ENCODE measurements at regions of chr16 and their contacts with region 1.

Region 1: DNA sequence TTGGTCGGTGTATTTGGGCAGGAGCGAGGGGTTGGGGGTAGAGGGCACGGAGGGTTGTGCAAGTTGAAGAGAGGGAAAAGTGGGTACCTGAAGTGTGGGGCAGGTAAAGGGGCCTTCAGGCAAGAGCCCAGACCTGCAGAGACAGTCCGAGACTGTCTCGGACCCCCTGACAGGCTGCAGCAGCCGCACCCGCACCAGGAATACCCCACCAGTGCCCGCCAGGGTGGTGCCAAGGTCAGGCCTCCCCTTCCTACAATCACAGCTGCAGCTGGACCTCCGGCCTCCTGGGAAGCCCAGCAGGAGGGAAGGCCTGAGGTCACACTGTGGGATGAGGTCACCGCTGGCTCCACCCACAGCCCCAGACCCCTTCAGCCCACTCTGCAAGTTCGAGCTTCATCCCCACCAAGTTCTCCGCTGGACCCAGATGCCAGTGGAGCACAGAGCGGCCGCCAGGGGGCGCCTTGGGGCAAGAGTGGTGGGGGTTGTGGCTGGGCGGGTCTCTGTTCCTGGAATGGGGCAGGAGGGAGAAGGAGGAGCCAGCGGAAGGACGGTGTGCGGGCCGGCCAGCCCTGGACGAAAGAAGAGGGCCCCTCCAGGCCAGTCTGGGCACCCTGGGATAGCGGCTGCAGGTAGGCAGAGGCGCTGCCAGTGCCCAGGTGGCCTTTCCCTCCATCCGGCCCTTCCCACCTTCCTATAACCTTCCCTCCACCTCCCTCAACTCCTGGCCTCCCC is at the start of gene HSD3B7:
- DNase-seq: peak; percentile 55 to 90 (median 78)
- ATAC-seq: peak; percentile 85
- H3K4me3 ChIP-seq: no peak within 1 kb of the TSS
- H3K4me3 Mint-ChIP-seq: no peak within 1 kb of the TSS
- H3K27ac ChIP-seq: no peak within 1 kb of the TSS
- H3K27ac Mint-ChIP-seq: no peak within 1 kb of the TSS
- H3K4me1 ChIP-seq: peaks cover 3% of the 10 kb centered on the region
- H3K4me1 Mint-ChIP-seq: peaks cover 4% of the 10 kb centered on the region
- H3K27me3 ChIP-seq: no peaks in the 10 kb centered on the region
- H3K27me3 Mint-ChIP-seq: no peaks in the 10 kb centered on the region
- CTCF ChIP-seq: peak; percentile 77
- total RNA-seq, gene HSD3B7: 0.19 to 0.25 TPM

Region 2: DNA sequence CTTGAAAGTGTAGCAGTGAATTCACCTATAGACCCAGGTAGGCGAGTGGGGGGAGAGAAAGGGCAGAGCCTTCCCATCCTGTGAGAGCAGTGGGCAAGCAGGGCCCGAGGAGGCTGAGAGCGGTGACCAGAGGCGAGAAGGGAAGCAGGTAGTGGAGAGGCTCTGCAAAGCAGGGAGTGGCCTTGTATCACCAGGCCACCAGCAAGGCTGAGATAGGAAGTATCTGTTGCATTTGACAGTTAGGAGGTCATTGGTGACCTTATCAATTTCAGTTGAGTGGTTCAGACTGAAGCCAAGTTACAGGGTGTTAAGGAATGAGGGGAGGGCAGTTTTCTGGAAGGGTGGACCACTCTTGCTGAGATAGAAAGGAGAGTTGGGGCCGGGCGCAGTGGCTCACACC is 10.5 kb before region 1 on chr16:
- CTCF ChIA-PET with region 1: interaction called, 14 read pairs
- POLR2A ChIA-PET with region 1: no interaction called
- intact Hi-C with region 1: no loop called
- DNase-seq: no peak
- ATAC-seq: no peak
- H3K4me3 ChIP-seq: no peak overlapping the region
- H3K4me3 Mint-ChIP-seq: no peak overlapping the region
- H3K27ac ChIP-seq: no peak overlapping the region
- H3K27ac Mint-ChIP-seq: peak overlapping the region; percentile 37
- H3K4me1 ChIP-seq: no peaks in the 10 kb centered on the region
- H3K4me1 Mint-ChIP-seq: peaks cover 2% of the 10 kb centered on the region
- H3K27me3 ChIP-seq: no peaks in the 10 kb centered on the region
- H3K27me3 Mint-ChIP-seq: no peaks in the 10 kb centered on the region
- CTCF ChIP-seq: no peak

Region 3: GRCh38 chr16:31094424-31095120 is 109.7 kb after region 1 on chr16 and contains the start of gene VKORC1:
- CTCF ChIA-PET with region 1: interaction called, 26 read pairs
- POLR2A ChIA-PET with region 1: no interaction called
- intact Hi-C with region 1: loop called (anchors 1 kb)
- DNase-seq: peak; percentile 65 to 93 (median 85)
- ATAC-seq: peak; percentile 86
- H3K4me3 ChIP-seq: peak within 1 kb of the TSS; percentile 72 to 91
- H3K4me3 Mint-ChIP-seq: peak within 1 kb of the TSS; percentile 93
- H3K27ac ChIP-seq: peak within 1 kb of the TSS; percentile 69 to 74
- H3K27ac Mint-ChIP-seq: peak within 1 kb of the TSS; percentile 91
- H3K4me1 ChIP-seq: peaks cover 19% of the 10 kb centered on the region
- H3K4me1 Mint-ChIP-seq: peaks cover 25% of the 10 kb centered on the region
- H3K27me3 ChIP-seq: no peaks in the 10 kb centered on the region
- H3K27me3 Mint-ChIP-seq: no peaks in the 10 kb centered on the region
- CTCF ChIP-seq: no peak
- total RNA-seq, gene VKORC1: 23.0 to 27.2 TPM

Region 4: GRCh38 chr16:31333686-31334649 is 349.1 kb after region 1 on chr16:
- CTCF ChIA-PET with region 1: interaction called, 3 read pairs
- POLR2A ChIA-PET with region 1: no interaction called
- intact Hi-C with region 1: loop called in 1 of 2 experiments (anchors 2 kb)
- DNase-seq: peak in 6 of 9 experiments; percentile 27 to 66 (median 39)
- ATAC-seq: peak; percentile 70
- H3K4me3 ChIP-seq: no peak overlapping the region
- H3K4me3 Mint-ChIP-seq: no peak overlapping the region
- H3K27ac ChIP-seq: no peak overlapping the region
- H3K27ac Mint-ChIP-seq: peak overlapping the region; percentile 49
- H3K4me1 ChIP-seq: peaks cover 37% of the 10 kb centered on the region
- H3K4me1 Mint-ChIP-seq: peaks cover 43% of the 10 kb centered on the region
- H3K27me3 ChIP-seq: no peaks in the 10 kb centered on the region
- H3K27me3 Mint-ChIP-seq: no peaks in the 10 kb centered on the region
- CTCF ChIP-seq: peak; percentile 12

Region 5: DNA sequence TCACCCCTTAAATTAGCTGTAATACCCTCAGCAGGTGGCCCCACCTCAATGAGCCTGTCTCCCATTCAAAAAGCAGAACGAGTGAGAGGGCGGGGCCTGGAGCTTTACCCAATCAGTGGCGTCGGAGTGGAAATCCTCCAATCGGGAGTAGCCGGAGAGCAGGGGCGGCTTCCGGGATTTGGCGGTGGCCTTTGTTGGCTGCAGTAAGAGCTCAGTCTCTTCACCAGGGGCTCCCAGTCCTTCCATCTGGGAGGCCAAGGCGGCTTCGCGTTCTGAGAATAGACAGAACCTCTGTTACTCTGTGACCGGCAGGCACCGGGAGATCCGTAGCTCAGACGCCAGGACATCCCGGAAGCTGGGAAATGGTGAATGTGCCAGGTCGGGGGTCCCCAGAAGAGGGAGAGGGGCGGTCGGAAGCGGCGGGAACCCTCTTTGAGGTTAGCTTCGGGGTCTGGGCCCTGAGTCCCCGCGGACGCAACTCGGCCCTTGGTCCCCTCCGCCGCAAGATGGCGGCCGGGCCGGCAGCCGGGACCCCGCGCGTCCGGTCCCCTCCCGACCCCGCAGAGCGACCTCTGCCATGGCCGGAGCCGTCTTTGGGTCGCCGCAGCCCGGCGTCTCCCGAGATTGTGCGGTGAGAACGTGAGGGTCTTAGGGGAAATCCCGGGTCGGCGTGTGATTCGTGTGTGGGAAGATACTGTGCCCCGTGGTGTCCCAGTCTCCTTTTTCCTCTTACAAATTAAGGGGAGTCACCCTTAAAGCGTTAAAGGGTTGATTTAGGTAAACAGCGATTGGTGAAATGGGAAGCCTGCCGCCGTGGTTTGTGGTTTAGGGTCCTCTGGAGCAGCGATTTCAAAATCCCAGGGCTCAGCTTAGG is 728.5 kb after region 1 on chr16:
- CTCF ChIA-PET with region 1: no interaction called
- POLR2A ChIA-PET with region 1: no interaction called
- intact Hi-C with region 1: loop called in 1 of 2 experiments (anchors 10 kb)
- DNase-seq: peak; percentile 84 to 94 (median 92)
- ATAC-seq: peak; percentile 94
- H3K4me3 ChIP-seq: peak overlapping the region; percentile 84 to 100
- H3K4me3 Mint-ChIP-seq: peak overlapping the region; percentile 98
- H3K27ac ChIP-seq: peak overlapping the region; percentile 83 to 98
- H3K27ac Mint-ChIP-seq: peak overlapping the region; percentile 97
- H3K4me1 ChIP-seq: peaks cover 50% of the 10 kb centered on the region
- H3K4me1 Mint-ChIP-seq: peaks cover 68% of the 10 kb centered on the region
- H3K27me3 ChIP-seq: no peaks in the 10 kb centered on the region
- H3K27me3 Mint-ChIP-seq: no peaks in the 10 kb centered on the region
- CTCF ChIP-seq: no peak

Measured in CD8-positive, alpha-beta T cell (primary cell).